ENCODE measurements at regions of chr6 and their contacts with region 1.

Region 1: DNA sequence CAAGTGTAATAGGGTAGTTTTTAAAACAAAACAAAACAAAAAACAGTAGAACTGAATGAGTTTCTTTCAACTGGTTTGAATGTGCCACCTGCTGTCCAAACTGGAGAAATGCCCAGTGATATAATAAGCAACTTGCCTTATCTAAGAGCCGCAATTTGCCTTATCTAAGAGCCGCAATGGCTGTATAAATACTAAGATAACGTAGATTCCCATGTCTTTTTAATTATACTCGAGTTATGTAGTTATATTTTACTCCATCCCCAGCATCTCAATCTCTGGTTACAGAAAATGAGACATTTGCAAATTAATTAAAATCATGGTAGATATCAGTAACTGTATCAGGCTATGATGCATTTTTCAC is 67.2 kb downstream of the RPP40 start:
- DNase-seq: peak; percentile 67
- H3K4me3 ChIP-seq: no peak overlapping the region
- H3K27ac ChIP-seq: no peak overlapping the region
- H3K4me1 ChIP-seq: peaks cover under 1% of the 10 kb centered on the region
- H3K27me3 ChIP-seq: no peaks in the 10 kb centered on the region
- CTCF ChIP-seq: peak; percentile 41 to 59
- POLR2A ChIP-seq: no peak

Region 2: DNA sequence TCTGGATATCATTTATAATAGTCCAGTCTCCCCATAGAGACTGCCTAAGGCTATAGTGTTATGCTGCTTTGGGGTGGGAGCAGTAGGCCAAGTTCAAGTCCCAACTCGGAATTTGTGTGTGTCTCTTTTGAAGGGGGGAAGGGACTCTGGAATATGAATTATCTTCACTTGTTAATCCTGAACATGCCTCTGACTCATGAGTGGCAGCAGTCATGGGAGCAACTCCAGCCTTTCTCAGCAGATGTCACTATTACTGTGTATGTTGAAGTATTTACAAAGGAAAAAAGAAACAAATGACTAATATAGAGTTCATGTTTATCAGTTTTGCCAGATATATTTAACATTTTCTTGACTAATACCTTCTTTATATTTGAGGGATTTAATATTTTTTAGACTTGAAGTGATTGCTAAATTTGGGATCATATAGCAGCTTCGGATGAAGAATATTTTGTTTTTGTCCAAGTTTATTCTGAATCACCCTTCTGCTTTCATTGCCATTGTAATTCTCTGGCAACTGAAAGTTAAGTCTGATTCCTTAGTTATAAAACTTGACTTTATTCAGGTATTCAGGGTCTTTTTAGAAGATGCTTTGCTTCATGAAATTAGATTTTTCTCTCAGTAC is 881.1 kb before region 1 on chr6:
- CTCF ChIA-PET with region 1: no interaction called
- POLR2A ChIA-PET with region 1: no interaction called
- dilution Hi-C with region 1: no loop called
- intact Hi-C with region 1: loop called (anchors 1 kb)
- DNase-seq: peak; percentile 92
- H3K4me3 ChIP-seq: no peak overlapping the region
- H3K27ac ChIP-seq: peak overlapping the region; percentile 41
- H3K4me1 ChIP-seq: peaks cover 22% of the 10 kb centered on the region
- H3K27me3 ChIP-seq: no peaks in the 10 kb centered on the region
- CTCF ChIP-seq: peak; percentile 44 to 59
- POLR2A ChIP-seq: no peak

Region 3: DNA sequence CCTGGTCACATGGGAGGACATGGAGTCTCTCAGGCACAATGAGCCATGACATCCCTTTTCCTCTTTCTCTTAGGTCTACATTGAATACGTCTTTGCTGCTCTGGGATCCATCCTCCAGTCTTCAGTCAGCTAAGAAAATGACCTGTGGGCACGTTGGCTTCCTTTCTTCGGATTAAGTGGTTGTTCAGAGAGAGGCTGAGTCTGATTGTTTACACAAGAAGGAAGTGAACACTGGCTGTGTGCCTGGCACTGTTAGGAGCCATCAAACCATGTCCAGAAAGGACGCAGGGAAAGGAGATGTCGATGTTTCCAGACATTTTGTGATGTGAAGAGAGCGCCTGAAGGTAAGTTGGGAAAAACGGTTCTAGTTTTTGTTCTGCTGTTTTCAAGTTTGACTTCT is 470.4 kb before region 1 on chr6:
- CTCF ChIA-PET with region 1: no interaction called
- POLR2A ChIA-PET with region 1: no interaction called
- dilution Hi-C with region 1: no loop called
- intact Hi-C with region 1: loop called (anchors 2 kb)
- DNase-seq: peak; percentile 76
- H3K4me3 ChIP-seq: no peak overlapping the region
- H3K27ac ChIP-seq: no peak overlapping the region
- H3K4me1 ChIP-seq: peaks cover 9% of the 10 kb centered on the region
- H3K27me3 ChIP-seq: no peaks in the 10 kb centered on the region
- CTCF ChIP-seq: no peak
- POLR2A ChIP-seq: no peak

Region 4: GRCh38 chr6:4732691-4733315 is 203.9 kb before region 1 on chr6:
- CTCF ChIA-PET with region 1: no interaction called
- POLR2A ChIA-PET with region 1: no interaction called
- dilution Hi-C with region 1: no loop called
- intact Hi-C with region 1: loop called (anchors 5 kb)
- DNase-seq: peak; percentile 85
- H3K4me3 ChIP-seq: peak overlapping the region in 1 of 3 experiments; percentile 1
- H3K27ac ChIP-seq: no peak overlapping the region
- H3K4me1 ChIP-seq: peaks cover 11% of the 10 kb centered on the region
- H3K27me3 ChIP-seq: peaks cover 5 to 8% of the 10 kb centered on the region in 2 experiments
- CTCF ChIP-seq: no peak
- POLR2A ChIP-seq: no peak

Region 5: DNA sequence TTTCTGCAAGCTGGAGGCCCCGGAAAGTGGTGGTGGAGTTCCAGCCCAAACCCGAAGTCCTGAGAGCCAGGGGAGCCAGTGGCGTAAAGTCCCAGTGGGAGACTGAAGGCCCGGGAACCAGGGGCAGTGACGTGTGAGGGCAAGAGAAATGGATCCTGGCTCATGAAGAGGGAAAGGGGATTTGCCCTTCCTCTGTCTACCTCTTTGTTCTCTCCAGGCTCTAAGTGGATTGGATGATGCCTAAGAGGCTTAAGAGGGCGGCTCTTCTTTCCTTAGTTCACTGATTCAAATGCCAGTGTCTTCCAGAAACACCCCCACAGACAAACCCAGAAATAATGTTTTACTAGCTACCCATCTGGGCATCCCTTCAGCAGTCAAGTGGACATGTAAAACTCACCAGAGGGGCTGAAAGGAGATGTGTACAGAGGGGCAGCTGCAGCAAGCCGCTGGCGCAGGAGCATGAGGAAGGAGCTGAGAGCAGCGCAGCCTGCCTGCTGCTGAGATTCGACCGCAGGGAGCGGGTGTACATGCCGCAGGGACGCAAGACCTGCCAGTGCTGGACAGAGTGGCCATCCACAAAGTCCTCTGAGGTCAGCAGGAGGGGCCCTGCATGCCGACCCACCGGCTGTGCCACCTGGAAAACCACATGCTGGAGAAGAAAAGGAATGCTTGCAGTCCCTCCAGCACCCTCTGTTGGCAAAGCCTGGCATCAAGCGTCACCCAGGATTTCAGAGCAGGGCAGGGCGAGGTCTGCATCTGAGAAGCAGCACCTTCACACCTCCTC is 130.9 kb before region 1 on chr6:
- CTCF ChIA-PET with region 1: no interaction called
- POLR2A ChIA-PET with region 1: no interaction called
- dilution Hi-C with region 1: no loop called
- intact Hi-C with region 1: loop called (anchors 5 kb)
- DNase-seq: peak; percentile 41
- H3K4me3 ChIP-seq: no peak overlapping the region
- H3K27ac ChIP-seq: no peak overlapping the region
- H3K4me1 ChIP-seq: peaks cover 9% of the 10 kb centered on the region
- H3K27me3 ChIP-seq: no peaks in the 10 kb centered on the region
- CTCF ChIP-seq: peak; percentile 49 to 57
- POLR2A ChIP-seq: no peak

Region 6: GRCh38 chr6:5030596-5031136 is 94.0 kb after region 1 on chr6:
- CTCF ChIA-PET with region 1: interaction called, 11 read pairs
- POLR2A ChIA-PET with region 1: no interaction called
- dilution Hi-C with region 1: no loop called
- intact Hi-C with region 1: loop called (anchors 2 kb)
- DNase-seq: peak; percentile 83
- H3K4me3 ChIP-seq: no peak overlapping the region
- H3K27ac ChIP-seq: no peak overlapping the region
- H3K4me1 ChIP-seq: peaks cover 7% of the 10 kb centered on the region
- H3K27me3 ChIP-seq: no peaks in the 10 kb centered on the region
- CTCF ChIP-seq: peak; percentile 71 to 74
- POLR2A ChIP-seq: no peak

Measured in endothelial cell of umbilical vein (primary cell).